ENCODE measurements at regions of chr1 and their contacts with region 1.

Region 1: GRCh38 chr1:24351918-24352627 is 32.9 kb downstream of the GRHL3 start:
- DNase-seq: peak; percentile 87
- H3K4me3 Mint-ChIP-seq: no peak overlapping the region
- H3K27ac Mint-ChIP-seq: peak overlapping the region; percentile 58
- H3K4me1 Mint-ChIP-seq: peaks cover 36% of the 10 kb centered on the region
- H3K27me3 Mint-ChIP-seq: peaks cover 1% of the 10 kb centered on the region

Region 2: GRCh38 chr1:24385160-24385940 is 33.3 kb after region 1 on chr1:
- CTCF ChIA-PET with region 1: interaction called, 18 read pairs
- POLR2A ChIA-PET with region 1: interaction called, 3 read pairs
- intact Hi-C with region 1: loop called (anchors 1 kb)
- DNase-seq: peak; percentile 64
- H3K4me3 Mint-ChIP-seq: no peak overlapping the region
- H3K27ac Mint-ChIP-seq: peak overlapping the region; percentile 7
- H3K4me1 Mint-ChIP-seq: peaks cover 26% of the 10 kb centered on the region
- H3K27me3 Mint-ChIP-seq: no peaks in the 10 kb centered on the region